Sigmoid colon (tissue), 7 donors: ENCODE measurements at regions of chr17 and their contacts with region 1.

Region 1: GRCh38 chr17:57604771-57605674 is 140.1 kb downstream of the CCDC182 start:
- DNase-seq: peak; percentile 84
- H3K4me3 ChIP-seq: peak overlapping the region in 2 of 4 donors; percentile 12 to 19
- H3K27ac ChIP-seq: peak overlapping the region; percentile 34 to 65 (median 57)
- H3K4me1 ChIP-seq: peaks cover 0 to 23% (median 20%) of the 10 kb centered on the region in 4 donors
- H3K27me3 ChIP-seq: no peaks in the 10 kb centered on the region
- CTCF ChIP-seq: no peak
- EP300 ChIP-seq: no peak
- POLR2A ChIP-seq: no peak

Region 2: GRCh38 chr17:57284984-57285646 is 319.9 kb before region 1 on chr17:
- intact Hi-C with region 1: loop called (anchors 5 kb)
- DNase-seq: no peak
- H3K4me3 ChIP-seq: no peak overlapping the region
- H3K27ac ChIP-seq: no peak overlapping the region
- H3K4me1 ChIP-seq: peaks cover 0 to 44% (median 39%) of the 10 kb centered on the region in 4 donors
- H3K27me3 ChIP-seq: no peaks in the 10 kb centered on the region
- CTCF ChIP-seq: no peak
- EP300 ChIP-seq: no peak
- POLR2A ChIP-seq: no peak

Region 3: GRCh38 chr17:57794841-57795240 is 189.8 kb after region 1 on chr17:
- intact Hi-C with region 1: no loop called
- DNase-seq: no peak
- H3K4me3 ChIP-seq: no peak overlapping the region
- H3K27ac ChIP-seq: no peak overlapping the region
- H3K4me1 ChIP-seq: no peaks in the 10 kb centered on the region
- H3K27me3 ChIP-seq: no peaks in the 10 kb centered on the region
- CTCF ChIP-seq: no peak
- EP300 ChIP-seq: no peak
- POLR2A ChIP-seq: no peak